ENCODE measurements at regions of chr7 and their contacts with region 1.

Region 1: DNA sequence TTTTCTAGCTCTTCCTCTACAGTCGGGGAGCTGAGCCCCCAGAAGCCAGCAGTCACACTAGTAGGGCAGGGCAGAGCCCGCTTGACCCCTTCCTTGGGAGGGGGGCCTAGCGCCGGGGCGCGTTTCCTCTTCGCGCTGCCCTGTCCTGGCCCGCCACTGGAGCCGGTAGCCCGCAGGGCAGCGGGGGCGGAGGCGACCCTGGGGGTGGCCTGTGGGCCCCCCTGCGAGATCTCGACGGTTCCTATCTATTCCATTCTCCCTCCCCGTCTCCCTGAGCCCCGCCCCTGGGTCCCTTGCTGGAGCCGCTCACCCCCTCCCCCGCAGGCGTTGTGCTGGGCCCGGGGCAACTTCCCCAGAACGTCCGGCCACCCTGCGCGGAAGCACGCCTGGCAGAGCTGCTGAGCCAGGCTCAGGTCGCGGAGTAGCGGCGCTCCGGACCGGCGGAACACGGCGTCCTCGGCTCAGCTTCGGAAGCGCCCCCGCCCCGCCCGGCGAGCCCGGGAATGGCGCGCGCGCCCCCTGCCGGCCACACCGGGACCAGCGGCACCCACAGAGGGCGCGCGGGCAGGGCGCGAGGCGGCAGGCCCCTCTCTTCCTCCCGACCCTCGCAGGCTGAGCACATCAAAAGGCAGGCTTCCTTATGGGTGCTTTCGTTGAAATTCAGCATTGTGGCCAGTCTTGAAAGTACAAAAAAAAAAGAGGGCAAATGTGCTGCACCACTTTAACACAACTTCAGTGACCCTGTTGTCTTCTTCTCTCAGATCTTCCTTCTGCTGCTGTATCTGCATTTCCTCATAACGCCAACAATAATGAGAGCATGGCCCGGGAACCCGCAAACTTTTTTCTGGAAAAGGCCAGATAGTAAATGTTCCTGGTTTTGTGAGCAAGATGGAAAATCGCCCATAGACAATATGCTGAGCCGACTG is 327.6 kb downstream of the TNS3 start:
- DNase-seq: peak; percentile 76

Region 2: DNA sequence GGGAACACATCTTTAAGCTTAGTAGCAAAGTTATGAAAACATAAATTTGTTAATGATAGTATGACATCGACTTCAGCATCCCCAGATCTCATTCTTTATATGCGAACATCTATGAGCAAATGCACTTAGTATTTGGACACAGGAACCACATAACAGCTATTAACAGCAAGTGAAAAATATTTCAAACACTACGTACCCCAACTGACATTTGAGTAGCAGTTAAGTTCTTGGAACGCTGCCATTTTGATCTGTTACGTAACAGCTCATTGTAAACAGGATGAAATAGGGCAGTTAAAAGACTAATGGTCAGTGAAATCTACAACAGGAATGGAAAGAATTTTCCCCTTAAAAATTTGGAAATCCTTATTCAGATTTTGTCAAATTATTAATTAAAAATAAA is 101.3 kb before region 1 on chr7:
- in situ Hi-C with region 1: loop called (anchors 25 kb)
- DNase-seq: peak; percentile 75

Measured in ACHN (cell line).